ENCODE measurements at regions of chr5 and their contacts with region 1.

Region 1: GRCh38 chr5:115246361-115246991 is 16.2 kb downstream of the PGGT1B start:
- DNase-seq: no peak
- ATAC-seq: no peak
- H3K4me3 ChIP-seq: no peak overlapping the region
- H3K27ac ChIP-seq: no peak overlapping the region
- H3K4me1 ChIP-seq: peaks cover 0 to 3% of the 10 kb centered on the region in 2 donors
- H3K27me3 ChIP-seq: no peaks in the 10 kb centered on the region

Region 2: DNA sequence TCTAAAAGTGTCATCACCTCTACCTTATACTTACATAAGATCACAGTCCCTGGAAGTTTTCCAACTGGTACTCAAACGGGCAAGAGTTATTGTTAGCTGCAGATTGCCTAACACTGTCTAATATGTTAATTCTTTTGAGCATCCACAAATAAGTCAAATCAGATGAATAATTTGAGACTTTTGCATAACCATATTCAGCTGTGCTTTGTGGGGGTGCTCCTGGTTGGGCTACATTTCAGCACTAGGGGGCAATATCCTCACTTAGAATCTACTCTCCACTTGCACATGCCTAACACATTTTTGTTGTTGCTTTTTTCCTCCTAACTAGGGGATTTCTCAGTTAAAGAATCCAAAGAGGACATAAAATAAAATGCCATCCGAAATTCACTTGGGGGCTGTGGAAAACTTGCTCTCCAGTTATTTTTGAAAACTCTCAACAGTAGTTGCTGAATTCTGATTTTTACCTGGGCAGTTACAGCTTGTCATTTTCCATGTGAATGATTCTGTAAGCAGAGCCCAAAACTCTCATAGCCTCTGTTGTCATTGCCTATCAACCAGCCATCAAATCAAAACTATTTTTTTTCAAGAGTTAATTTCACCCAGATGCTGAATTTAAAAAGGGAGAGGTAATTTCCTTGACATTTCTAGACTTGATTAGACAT is 148.3 kb before region 1 on chr5:
- intact Hi-C with region 1: loop called (anchors 1 to 2 kb)
- DNase-seq: no peak
- ATAC-seq: no peak
- H3K4me3 ChIP-seq: no peak overlapping the region
- H3K27ac ChIP-seq: no peak overlapping the region
- H3K4me1 ChIP-seq: no peaks in the 10 kb centered on the region
- H3K27me3 ChIP-seq: no peaks in the 10 kb centered on the region

Region 3: GRCh38 chr5:115169487-115170133 is 76.9 kb before region 1 on chr5 and contains the start of gene TRIM36:
- intact Hi-C with region 1: loop called (anchors 5 to 10 kb)
- DNase-seq: peak; percentile 96
- ATAC-seq: peak; percentile 99
- H3K4me3 ChIP-seq: peak within 1 kb of the TSS; percentile 24 to 69
- H3K27ac ChIP-seq: no peak within 1 kb of the TSS
- H3K4me1 ChIP-seq: no peaks in the 10 kb centered on the region
- H3K27me3 ChIP-seq: no peaks in the 10 kb centered on the region
- total RNA-seq, gene TRIM36: 4.4 to 23.9 TPM

Region 4: DNA sequence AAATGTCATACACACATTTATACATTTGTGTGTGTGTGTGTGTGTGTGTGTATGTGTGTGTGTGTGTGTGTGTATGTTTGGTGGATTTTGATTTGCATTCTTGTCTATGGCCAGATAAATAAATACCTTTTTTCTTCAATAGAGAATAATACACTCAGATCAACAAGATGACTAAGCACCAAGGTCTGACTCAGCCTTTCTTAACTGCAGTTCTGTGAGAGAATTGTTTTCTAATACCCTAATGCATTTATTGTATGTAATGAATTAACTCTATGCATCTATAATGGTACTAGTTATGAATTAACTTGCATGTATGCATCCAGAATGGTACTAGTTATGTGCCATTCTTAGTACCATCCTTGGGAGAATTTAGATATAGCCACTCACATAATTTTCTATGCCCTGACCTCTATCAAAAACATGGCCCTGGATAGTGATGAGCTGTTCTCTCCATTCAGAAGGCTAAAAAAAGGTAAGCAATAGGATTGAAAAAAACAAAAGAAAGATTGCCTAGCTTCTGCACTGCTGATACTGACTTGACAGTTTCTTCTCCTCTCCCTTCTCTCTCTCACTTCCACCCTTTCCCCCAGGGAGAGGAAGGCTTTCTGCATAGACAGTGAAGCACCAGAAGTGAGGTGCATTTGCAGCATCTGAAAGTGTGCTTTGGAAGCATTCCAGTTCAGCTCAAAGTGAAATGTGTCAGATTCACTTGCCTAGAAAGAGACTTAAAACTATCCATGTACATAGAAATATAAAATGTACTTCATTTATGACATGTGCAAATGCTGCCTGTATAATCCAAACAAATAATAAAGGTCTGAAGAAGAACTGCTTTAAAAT is 105.1 kb after region 1 on chr5:
- intact Hi-C with region 1: no loop called
- DNase-seq: no peak
- ATAC-seq: no peak
- H3K4me3 ChIP-seq: no peak overlapping the region
- H3K27ac ChIP-seq: no peak overlapping the region
- H3K4me1 ChIP-seq: peaks cover 0 to 2% of the 10 kb centered on the region in 2 donors
- H3K27me3 ChIP-seq: no peaks in the 10 kb centered on the region

Measured in aorta (tissue), 5 donors.